A673 (cell line): ENCODE measurements at regions of chr7 and their contacts with region 1.

Region 1: GRCh38 chr7:90155206-90155605 is 937 bp downstream of the STEAP1 start:
- DNase-seq: peak; percentile 28
- H3K4me3 ChIP-seq: peak overlapping the region; percentile 90
- H3K27ac ChIP-seq: peak overlapping the region; percentile 98
- H3K4me1 ChIP-seq: peaks cover 8% of the 10 kb centered on the region
- H3K27me3 ChIP-seq: no peaks in the 10 kb centered on the region
- CTCF ChIP-seq: no peak

Region 2: DNA sequence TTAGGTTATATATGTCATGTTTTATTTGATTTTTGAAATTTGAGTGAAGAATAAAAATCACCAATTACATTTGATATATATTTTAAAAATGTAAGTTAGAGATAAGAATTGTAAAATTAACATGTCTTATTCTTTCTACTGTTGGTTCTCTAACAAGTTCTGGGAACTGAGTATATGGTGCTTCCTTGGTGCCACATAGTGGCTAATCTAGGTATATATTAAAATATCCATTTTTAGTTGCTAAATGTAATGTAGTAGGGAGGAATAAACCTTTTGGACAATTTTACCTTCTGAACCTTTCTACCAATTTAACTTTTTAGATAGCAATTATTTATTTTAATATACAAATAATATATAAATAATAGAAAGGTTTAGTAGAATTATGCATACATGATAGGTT is 107.2 kb after region 1 on chr7:
- CTCF ChIA-PET with region 1: no interaction called
- POLR2A ChIA-PET with region 1: interaction called, 3 read pairs
- intact Hi-C with region 1: loop called (anchors 1 kb)
- DNase-seq: peak; percentile 65
- H3K4me3 ChIP-seq: no peak overlapping the region
- H3K27ac ChIP-seq: peak overlapping the region; percentile 2
- H3K4me1 ChIP-seq: peaks cover 33% of the 10 kb centered on the region
- H3K27me3 ChIP-seq: no peaks in the 10 kb centered on the region
- CTCF ChIP-seq: peak; percentile 64

Region 3: DNA sequence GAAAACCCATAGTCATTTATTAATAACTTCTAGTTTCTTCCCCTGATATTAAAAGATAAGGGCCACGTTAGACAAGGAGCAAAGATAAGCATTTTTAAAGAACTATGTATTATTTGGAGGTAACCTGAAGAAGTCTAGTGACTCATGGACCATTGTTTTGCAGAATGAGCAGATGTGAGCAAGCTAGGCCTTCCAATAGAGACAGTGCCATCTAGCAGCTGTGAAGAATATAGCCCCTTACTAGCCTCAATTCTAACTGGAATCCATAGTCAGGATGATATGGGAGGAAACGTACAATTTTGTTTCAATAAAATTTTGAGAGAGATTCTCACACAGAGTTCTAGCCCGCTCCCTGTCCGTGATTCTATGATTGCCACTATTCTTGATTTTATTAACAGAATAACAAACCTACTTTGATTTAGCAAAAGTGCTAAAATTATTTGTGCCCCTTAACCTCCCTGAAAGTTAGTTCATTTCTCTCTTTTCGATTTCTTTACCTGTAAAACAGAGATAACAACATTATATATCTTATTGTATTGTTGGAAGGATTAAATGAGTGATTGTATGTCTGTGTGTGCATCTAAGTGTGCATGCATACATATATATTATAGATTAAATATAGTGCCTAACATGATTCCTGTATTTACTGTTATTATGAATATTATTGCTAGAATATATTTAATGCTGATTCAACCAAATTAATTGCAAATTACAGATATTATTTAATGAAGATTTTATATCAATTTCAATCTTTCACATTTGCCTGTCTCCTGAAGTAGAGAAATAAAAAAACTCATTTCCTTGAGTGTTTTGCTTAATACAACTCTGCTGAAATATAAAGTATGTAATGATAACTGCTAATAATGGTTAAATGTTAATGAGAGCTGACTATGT is 143.2 kb after region 1 on chr7:
- CTCF ChIA-PET with region 1: no interaction called
- POLR2A ChIA-PET with region 1: no interaction called
- intact Hi-C with region 1: loop called (anchors 10 kb)
- DNase-seq: peak; percentile 76
- H3K4me3 ChIP-seq: no peak overlapping the region
- H3K27ac ChIP-seq: no peak overlapping the region
- H3K4me1 ChIP-seq: no peaks in the 10 kb centered on the region
- H3K27me3 ChIP-seq: no peaks in the 10 kb centered on the region
- CTCF ChIP-seq: peak; percentile 83

Region 4: DNA sequence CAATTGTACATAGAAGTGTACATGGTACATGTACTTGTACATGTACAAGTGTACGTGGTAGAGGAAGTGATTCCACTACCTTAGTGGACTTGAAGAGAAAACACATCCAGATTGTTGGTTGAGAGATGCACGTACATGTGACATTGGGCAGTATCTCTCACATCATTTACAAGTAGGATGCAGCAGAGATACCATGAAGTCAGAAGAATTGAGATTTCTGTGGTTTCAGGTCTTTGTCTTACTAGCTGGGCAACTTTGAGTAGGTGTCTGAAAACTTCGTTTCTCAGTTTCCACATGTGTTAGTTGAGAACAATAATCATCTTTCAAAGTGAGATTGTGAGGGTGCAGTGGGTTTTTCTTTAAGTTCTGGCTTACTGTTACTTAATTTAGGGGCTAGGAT is 269.5 kb after region 1 on chr7:
- CTCF ChIA-PET with region 1: interaction called, 3 read pairs
- POLR2A ChIA-PET with region 1: no interaction called
- intact Hi-C with region 1: loop called (anchors 2 kb)
- DNase-seq: no peak
- H3K4me3 ChIP-seq: no peak overlapping the region
- H3K27ac ChIP-seq: no peak overlapping the region
- H3K4me1 ChIP-seq: peaks cover 9% of the 10 kb centered on the region
- H3K27me3 ChIP-seq: no peaks in the 10 kb centered on the region
- CTCF ChIP-seq: no peak

Region 5: DNA sequence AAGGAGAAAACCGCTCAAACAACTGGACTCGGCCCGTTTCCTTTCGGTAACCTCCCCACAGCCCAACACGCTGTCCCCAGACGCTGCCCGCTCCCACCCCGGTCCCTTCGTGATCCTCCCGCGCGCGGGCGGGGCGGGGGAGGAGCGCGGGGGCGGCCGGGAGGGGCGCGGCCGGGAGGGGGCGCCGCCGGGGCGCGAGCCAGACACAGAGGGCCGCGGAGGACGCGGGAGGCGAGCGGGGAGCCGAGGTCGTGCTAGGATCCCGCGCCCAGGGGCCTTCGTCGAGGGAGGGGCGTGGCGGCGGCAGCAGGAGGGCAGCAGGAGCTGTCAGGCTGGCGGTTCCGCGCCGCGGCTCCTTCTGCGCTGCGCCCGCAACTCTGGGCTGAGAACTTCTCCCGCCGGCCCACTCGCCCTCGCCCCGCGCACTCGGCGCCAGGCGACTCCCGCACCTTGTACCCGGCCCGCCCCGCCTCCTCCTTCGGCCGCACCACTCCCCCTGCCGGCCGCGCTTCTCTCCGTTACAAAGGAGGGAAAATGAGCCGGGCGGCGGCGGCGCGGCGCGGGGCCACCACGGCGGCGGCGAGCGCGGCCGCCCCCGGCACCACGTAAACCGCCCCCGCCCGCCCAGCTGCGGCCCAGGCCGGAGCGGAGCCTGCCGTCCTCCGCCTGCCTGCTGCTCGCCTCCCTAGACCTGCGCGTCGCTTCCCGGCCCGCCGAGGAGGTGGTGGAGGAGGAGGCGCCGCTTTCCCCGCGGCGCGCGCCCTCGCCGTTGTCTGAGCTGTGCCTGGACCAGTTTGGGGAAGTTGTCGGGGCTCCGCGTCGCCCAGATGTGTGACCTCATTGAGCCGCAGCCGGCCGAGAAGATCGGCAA is 440.8 kb after region 1 on chr7 and contains the start of gene CDK14:
- CTCF ChIA-PET with region 1: no interaction called
- POLR2A ChIA-PET with region 1: no interaction called
- intact Hi-C with region 1: loop called (anchors 10 kb)
- DNase-seq: peak; percentile 86
- H3K4me3 ChIP-seq: peak within 1 kb of the TSS; percentile 69
- H3K27ac ChIP-seq: peak within 1 kb of the TSS; percentile 94
- H3K4me1 ChIP-seq: peaks cover 46% of the 10 kb centered on the region
- H3K27me3 ChIP-seq: no peaks in the 10 kb centered on the region
- CTCF ChIP-seq: peak; percentile 43
- total RNA-seq, gene CDK14: 128 and 131 TPM in 2 replicates

Region 6: GRCh38 chr7:90629297-90629918 is 474.2 kb after region 1 on chr7:
- CTCF ChIA-PET with region 1: no interaction called
- POLR2A ChIA-PET with region 1: no interaction called
- intact Hi-C with region 1: loop called (anchors 10 kb)
- DNase-seq: peak; percentile 85
- H3K4me3 ChIP-seq: no peak overlapping the region
- H3K27ac ChIP-seq: no peak overlapping the region
- H3K4me1 ChIP-seq: peaks cover 48% of the 10 kb centered on the region
- H3K27me3 ChIP-seq: no peaks in the 10 kb centered on the region
- CTCF ChIP-seq: peak; percentile 79